Naive thymus-derived CD8-positive, alpha-beta T cell (primary cell): ENCODE measurements at regions of chr7 and their contacts with region 1.

Region 1: DNA sequence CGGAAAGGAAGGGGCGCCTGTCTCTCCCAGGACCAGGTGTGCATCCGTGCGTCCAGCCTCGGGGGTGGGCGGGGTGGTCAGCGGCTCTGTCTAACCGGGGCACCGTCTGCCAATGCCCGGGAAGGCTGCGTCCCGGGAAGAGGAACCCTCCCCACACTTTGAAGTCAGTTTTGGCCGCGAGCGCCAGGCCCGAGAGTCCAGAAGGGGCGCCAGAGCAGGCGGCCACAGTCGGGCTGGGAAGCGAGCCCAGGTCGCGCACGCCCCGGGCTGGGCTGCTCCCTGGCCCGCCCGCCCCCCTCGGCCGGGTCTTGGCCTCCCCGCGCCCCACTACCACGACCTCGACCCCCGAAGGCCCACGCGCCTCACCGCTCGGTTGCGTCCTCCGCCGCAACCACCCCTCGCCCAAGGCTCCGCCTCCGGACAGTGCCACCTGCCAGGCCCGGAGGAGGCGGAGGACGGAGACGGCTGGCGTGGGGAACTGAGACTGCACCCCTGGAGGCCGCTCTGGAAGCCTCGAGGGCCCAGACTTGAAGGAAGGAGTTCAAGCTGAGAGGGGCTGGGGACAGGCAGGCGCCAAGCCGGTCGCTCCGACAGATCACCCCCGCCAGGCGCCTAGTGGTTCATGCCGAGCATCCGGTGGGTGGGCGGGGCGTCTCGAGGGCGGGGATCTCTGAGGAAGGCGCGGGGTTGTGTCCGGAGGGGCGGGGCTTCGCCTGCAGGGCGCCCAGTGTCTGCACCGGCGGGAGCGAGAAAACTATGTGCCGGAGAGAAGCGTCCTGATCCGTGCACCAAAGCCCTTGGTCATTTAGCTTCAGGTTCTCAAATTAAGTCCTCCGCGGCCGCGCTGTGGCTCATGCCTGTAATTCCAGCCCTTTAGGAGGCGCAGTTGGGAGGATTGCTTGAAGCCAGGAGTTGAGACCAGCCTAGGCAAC is at the start of gene BRAT1:
- DNase-seq: peak; percentile 86 to 97 (median 94)
- ATAC-seq: peak; percentile 83 to 87
- H3K4me3 Mint-ChIP-seq: peak within 1 kb of the TSS; percentile 81 to 95 (median 87)
- H3K27ac Mint-ChIP-seq: peak within 1 kb of the TSS; percentile 59 to 95 (median 90)
- H3K4me1 Mint-ChIP-seq: peaks cover 10 to 55% (median 42%) of the 10 kb centered on the region in 4 donors
- H3K27me3 Mint-ChIP-seq: no peaks in the 10 kb centered on the region
- polyA plus RNA-seq, gene BRAT1: 21.0 to 43.6 (median 25.4) TPM

Region 2: GRCh38 chr7:2519119-2519930 is 36.1 kb before region 1 on chr7 and contains the start of gene LFNG:
- POLR2A ChIA-PET with region 1: interaction called, 33 read pairs
- DNase-seq: peak; percentile 59 to 91 (median 82)
- ATAC-seq: peak; percentile 72 to 75
- H3K4me3 Mint-ChIP-seq: peak within 1 kb of the TSS; percentile 91 to 99 (median 97)
- H3K27ac Mint-ChIP-seq: peak within 1 kb of the TSS; percentile 45 to 97 (median 91)
- H3K4me1 Mint-ChIP-seq: peaks cover 19 to 46% (median 39%) of the 10 kb centered on the region in 4 donors
- H3K27me3 Mint-ChIP-seq: no peaks in the 10 kb centered on the region
- polyA plus RNA-seq, gene LFNG: 0.54 to 3.0 (median 1.6) TPM

Region 3: GRCh38 chr7:2529161-2530070 is 26.0 kb before region 1 on chr7:
- POLR2A ChIA-PET with region 1: interaction called, 33 read pairs
- DNase-seq: peak in 8 of 10 donors; percentile 52 to 79 (median 61)
- ATAC-seq: peak; percentile 26 to 44
- H3K4me3 Mint-ChIP-seq: peak overlapping the region; percentile 71 to 87 (median 80)
- H3K27ac Mint-ChIP-seq: peak overlapping the region; percentile 59 to 97 (median 93)
- H3K4me1 Mint-ChIP-seq: peaks cover 18 to 66% (median 65%) of the 10 kb centered on the region in 4 donors
- H3K27me3 Mint-ChIP-seq: no peaks in the 10 kb centered on the region

Region 4: DNA sequence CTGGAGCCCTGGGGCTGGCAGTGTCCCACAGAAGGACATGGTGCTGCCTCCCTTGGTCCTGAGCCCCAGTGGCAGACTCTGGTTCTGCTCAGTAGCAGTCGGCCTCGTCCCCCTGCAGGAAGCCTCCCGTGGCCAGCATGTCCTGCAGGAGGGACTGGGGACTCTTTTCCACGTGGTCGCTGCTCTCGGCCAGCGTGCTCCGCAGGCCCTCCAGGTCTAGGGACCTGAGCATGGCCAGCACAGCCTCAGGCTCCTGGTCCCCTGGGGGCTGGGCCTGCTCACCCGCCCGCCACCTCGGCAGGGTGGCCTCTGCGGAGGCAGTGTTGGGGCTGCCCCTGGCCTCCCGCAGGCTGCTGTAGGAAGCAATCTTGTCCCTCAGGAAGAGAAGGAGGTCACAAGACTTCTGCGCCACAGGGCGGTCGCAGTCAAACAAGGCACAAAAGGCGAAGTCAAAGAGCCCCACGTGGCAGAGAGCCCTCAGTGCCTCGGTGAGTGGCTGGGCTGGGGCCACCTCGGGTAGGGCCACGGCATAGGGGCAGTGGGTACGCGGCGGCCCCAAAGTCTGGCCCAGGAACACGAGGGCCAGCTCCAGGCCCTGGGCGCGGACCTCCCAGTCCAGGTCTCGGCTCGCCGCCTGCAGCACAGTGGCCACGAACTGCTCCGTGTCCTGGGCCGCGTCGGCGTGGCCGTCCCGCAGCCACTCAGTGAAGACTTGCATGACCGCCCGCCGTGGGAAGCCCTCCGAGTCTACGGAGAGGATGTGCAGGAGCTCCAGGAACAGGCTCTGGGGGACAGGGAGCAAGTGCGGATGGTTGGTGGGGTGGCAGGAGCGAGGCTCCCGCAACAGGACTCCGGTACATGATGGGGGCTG is 17.2 kb before region 1 on chr7:
- POLR2A ChIA-PET with region 1: interaction called, 11 read pairs
- DNase-seq: peak in 1 of 10 donors; percentile 60
- ATAC-seq: peak in 1 of 2 donors; percentile 13
- H3K4me3 Mint-ChIP-seq: peak overlapping the region in 1 of 10 donors; percentile 14
- H3K27ac Mint-ChIP-seq: peak overlapping the region in 1 of 10 donors; percentile 88
- H3K4me1 Mint-ChIP-seq: peaks cover 0 to 2% (median 0%) of the 10 kb centered on the region in 4 donors
- H3K27me3 Mint-ChIP-seq: no peaks in the 10 kb centered on the region

Region 5: GRCh38 chr7:2567679-2568278 is 12.4 kb after region 1 on chr7:
- POLR2A ChIA-PET with region 1: no interaction called
- DNase-seq: peak in 1 of 10 donors; percentile 28
- ATAC-seq: peak in 1 of 2 donors; percentile 44
- H3K4me3 Mint-ChIP-seq: no peak overlapping the region
- H3K27ac Mint-ChIP-seq: no peak overlapping the region
- H3K4me1 Mint-ChIP-seq: peaks cover 2 to 9% (median 6%) of the 10 kb centered on the region in 4 donors
- H3K27me3 Mint-ChIP-seq: no peaks in the 10 kb centered on the region